HepG2 (cell line): ENCODE measurements at regions of chr2 and their contacts with region 1.

Region 1: DNA sequence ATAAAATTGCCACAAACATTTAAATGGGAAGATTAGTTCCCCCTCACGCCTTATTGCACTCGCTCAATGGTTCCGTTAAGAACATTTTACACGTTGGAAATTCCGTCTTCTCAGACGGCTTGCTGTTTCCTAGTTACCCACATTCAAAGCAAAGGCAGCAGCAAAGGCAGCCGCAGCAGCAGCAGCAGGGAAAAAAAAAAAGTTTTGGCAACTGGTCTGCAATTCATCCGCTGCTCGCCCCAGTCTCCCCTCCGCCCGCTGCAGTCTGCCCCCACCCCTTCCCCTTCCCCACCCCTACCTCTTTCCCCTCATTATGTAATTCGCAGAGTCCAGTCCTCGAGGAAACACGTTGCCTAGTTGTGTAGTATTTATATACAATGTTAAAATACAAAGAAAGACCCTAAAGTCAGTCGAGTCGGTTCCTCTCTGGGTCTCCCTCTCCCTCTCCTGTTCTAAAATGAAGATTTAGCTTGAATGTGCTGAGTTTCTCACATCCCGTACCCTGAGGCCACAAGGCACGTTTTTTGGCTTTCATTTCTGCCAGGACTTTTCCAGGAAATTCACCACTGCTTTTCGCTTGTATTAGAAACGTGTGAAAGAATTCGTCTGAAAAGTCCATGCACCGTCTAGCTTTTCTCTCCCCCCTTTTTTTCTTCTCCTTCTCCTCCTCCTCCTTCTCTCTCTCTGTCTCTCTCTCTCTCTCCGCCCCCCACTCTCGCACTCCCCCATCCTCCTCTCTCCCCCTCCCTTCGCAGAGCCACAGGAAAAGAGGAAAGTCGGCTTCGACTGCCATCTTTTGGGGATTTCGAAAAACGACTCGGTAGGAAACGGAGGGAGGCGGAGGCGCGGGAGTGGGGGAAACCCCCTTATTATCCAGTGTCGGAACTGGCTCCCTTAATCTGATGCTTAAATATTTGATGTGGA is 140.0 kb downstream of the MEIS1 start:
- DNase-seq: peak; percentile 57
- ATAC-seq: peak; percentile 61
- H3K4me3 ChIP-seq: peak overlapping the region; percentile 53 to 70 (median 62)
- H3K27ac ChIP-seq: no peak overlapping the region
- H3K4me1 ChIP-seq: peaks cover 36% of the 10 kb centered on the region
- H3K27me3 ChIP-seq: peaks cover 20 to 45% of the 10 kb centered on the region in 2 experiments
- CTCF ChIP-seq: peak; percentile 86
- EP300 ChIP-seq: no peak
- POLR2A ChIP-seq: no peak
- RAD21 ChIP-seq: peak; percentile 59

Region 2: DNA sequence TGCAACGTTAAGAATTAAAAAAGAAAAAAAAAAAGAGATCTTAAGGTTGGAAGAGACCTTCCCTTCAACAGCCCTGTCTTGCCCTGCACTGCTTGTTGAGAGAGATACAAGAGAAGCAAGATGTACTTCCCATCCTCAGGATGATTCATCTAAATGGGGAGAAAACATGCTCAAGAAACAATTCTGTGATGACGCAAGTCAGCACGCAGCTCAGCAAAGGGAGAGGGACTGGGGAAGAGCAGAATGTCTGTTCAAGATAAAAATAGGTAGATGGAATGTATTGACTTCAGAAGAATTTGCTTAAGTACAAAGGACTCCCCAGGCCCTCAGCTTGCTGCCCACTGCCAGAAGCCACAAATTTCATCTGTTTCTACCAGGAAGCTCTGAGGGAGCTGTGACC is 944.3 kb before region 1 on chr2:
- CTCF ChIA-PET with region 1: no interaction called
- POLR2A ChIA-PET with region 1: no interaction called
- in situ Hi-C with region 1: loop called (anchors 25 kb)
- intact Hi-C with region 1: no loop called
- DNase-seq: no peak
- ATAC-seq: no peak
- H3K4me3 ChIP-seq: no peak overlapping the region
- H3K27ac ChIP-seq: no peak overlapping the region
- H3K4me1 ChIP-seq: no peaks in the 10 kb centered on the region
- H3K27me3 ChIP-seq: peaks cover 0 to 6% of the 10 kb centered on the region in 2 experiments; a peak in 1 of 5 replicates
- CTCF ChIP-seq: no peak
- EP300 ChIP-seq: no peak
- POLR2A ChIP-seq: no peak
- RAD21 ChIP-seq: no peak

Region 3: DNA sequence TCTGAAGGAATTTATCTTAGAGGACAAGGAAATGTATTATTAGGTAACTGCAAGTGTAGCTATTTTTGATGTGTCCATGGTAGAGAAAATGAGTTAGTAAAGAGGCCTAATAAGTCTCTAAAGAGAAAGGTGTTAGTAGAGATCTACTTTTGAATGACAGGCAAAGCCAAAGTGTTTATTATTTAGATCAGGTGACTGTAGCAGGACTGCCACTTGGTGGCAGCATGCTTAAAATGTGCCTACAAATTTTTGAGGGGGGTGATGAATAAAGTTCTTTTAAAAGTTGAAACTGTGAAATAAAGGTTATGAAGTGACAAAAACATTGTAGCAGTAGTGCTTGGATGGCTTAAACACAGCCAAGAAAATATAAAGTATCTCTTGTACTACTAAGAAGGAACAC is 561.5 kb before region 1 on chr2:
- CTCF ChIA-PET with region 1: no interaction called
- POLR2A ChIA-PET with region 1: no interaction called
- in situ Hi-C with region 1: loop called (anchors 10 kb)
- intact Hi-C with region 1: loop called (anchors 2 kb)
- DNase-seq: peak; percentile 20
- ATAC-seq: no peak
- H3K4me3 ChIP-seq: no peak overlapping the region
- H3K27ac ChIP-seq: no peak overlapping the region
- H3K4me1 ChIP-seq: no peaks in the 10 kb centered on the region
- H3K27me3 ChIP-seq: no peaks in the 10 kb centered on the region
- CTCF ChIP-seq: peak; percentile 32; the same call in 1 of the 2 replicates
- EP300 ChIP-seq: no peak
- POLR2A ChIP-seq: no peak
- RAD21 ChIP-seq: no peak